H1 (cell line): ENCODE measurements at regions of chr22 and their contacts with region 1.

Region 1: DNA sequence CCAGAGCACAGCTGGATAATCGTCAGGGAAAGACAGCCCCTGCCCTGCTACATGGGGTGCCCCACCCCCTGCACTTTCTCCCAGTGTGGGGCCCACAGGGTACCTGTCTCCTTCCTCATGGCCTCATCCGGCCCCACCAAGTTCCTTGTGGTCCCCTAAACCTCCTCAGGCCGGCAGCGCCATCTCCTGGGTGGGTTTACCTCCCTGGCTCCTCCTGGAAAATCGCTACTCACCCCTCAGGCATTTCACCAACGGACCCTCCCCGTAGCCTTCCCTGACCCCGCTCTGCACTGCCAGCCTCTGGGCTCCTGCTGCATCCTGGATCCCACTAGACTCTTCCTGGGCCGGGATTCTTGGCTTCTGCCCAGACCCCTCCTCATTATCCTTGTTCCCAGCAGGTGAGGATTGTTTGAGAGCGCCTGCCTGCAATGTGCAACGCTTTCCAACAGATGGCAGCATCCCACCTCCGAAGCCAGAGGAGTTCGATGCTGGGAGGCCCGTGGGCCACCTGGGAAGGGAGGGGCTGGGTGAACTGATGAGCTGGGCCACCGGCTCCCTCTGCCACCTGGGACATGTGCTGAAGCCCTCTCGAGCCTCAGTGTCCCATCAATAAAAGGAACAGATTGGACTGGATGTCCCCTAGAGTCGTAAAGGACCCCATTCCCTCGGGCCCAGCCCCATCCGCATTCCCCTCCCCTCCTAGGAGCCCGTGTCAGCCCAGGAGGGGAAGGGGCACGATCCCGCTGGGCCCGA is 44.2 kb upstream of the TTLL12 start:
- DNase-seq: peak; percentile 66 to 92
- H3K4me3 ChIP-seq: peak overlapping the region in 3 of 4 experiments; percentile 40 to 54 (median 52); a peak in 6 of 8 replicates
- H3K27ac ChIP-seq: no peak overlapping the region
- H3K4me1 ChIP-seq: peaks cover 0 to 19% (median 13%) of the 10 kb centered on the region in 4 experiments; a peak in 6 of 7 replicates
- H3K27me3 ChIP-seq: no peaks in the 10 kb centered on the region
- CTCF ChIP-seq: peak; percentile 88 to 94 (median 89)
- EP300 ChIP-seq: no peak
- POLR2A ChIP-seq: no peak
- RAD21 ChIP-seq: peak; percentile 84 to 88

Region 2: DNA sequence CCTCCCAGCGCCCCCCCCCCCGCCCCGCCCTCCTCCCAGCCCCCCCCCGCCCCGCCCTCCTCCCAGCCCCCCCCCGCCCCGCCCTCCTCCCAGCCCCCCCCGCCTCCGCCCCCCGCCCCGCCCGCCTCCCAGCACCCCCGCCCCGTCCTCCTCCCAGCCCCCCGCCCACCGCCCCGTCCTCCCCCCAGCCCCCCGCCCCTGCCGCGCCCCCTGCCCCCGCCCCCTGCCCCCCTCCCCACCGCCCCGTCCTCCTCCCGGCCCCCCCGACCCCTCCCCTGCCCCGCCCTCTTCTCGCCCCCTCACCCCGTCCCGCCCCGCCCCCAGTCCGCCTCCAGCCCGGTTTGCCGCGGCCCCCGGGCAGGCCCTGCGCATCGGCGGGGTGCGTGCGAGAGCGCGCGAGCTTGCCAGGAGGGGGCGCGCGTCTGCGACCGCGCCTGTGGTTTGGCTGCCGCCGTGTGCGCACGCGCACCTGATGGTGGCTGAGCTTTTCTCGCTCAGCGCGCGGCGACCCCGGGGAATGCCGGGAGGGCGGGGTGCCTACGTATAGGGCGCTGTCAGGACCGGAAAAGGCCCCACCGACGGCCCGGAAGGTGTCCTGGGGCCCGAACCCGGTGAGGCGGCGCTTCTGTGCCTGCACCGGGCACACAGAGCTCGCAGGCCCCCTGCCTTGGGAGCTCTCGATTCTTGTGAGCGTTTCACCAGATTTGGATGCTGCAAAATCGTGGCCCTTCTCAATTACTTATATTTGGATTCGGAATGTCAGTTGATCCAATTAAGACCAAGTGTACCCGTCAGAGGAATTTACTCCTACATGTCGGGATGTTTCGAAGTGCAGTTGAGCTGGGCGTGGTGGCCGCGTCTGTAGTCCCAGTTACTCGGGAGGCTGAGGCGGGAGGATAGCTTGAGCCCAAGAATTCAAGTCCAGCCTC is 43.7 kb before region 1 on chr22:
- CTCF ChIA-PET with region 1: interaction called, 104 read pairs
- POLR2A ChIA-PET with region 1: no interaction called
- DNase-seq: peak; percentile 87 to 96
- H3K4me3 ChIP-seq: peak overlapping the region; percentile 34 to 62 (median 40); a peak in 7 of 8 replicates
- H3K27ac ChIP-seq: peak overlapping the region; percentile 53; the same call in 1 of the 2 replicates
- H3K4me1 ChIP-seq: peaks cover 0 to 14% (median 5%) of the 10 kb centered on the region in 4 experiments; a peak in 4 of 7 replicates
- H3K27me3 ChIP-seq: no peaks in the 10 kb centered on the region; a peak in 1 of 7 replicates
- CTCF ChIP-seq: peak; percentile 59 to 64 (median 60)
- EP300 ChIP-seq: peak in 1 of 2 experiments; percentile 5; a peak in 1 of 3 replicates
- POLR2A ChIP-seq: peak; percentile 26 to 68
- RAD21 ChIP-seq: peak; percentile 22 to 35; a peak in 3 of 4 replicates

Region 3: GRCh38 chr22:43213051-43213450 is 18.1 kb before region 1 on chr22:
- CTCF ChIA-PET with region 1: interaction called, 186 read pairs
- POLR2A ChIA-PET with region 1: interaction called, 5 read pairs
- DNase-seq: peak in 1 of 2 experiments; percentile 63
- H3K4me3 ChIP-seq: no peak overlapping the region
- H3K27ac ChIP-seq: no peak overlapping the region
- H3K4me1 ChIP-seq: peaks cover 0 to 20% (median 10%) of the 10 kb centered on the region in 4 experiments; a peak in 5 of 7 replicates
- H3K27me3 ChIP-seq: no peaks in the 10 kb centered on the region
- CTCF ChIP-seq: no peak
- EP300 ChIP-seq: no peak
- POLR2A ChIP-seq: no peak
- RAD21 ChIP-seq: no peak

Region 4: DNA sequence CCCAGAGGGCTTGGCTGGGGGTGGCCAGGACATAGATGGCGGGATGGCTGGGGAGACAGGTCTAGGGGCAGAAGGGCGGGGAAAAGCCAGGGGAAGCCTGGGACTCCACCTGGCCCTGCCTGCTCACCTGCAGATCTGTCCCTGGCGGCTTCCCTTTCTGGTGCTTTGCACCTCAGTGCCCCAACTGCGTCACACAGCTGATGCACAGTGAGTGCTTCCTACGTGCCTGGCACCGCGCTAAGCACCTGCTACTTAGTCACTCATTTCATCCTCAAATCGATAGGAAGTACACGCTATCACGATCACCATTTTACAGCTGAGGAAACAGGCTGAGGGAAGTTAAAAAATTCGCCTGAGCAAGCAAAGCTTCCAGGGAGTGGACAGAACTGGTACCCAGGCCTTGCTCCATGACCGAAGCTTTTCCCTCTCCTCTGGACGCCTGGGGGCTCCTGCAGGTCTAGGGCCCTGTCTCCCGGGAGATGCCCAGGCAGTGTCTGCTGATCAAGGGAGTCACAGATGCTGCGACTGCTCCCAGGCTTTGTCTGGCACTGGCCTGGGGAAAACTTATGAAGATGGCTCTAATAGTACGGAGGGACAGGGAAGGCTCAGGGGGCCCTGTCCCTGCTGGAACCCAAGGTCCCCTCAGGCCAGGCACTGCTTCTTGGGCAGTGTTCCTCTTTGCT is 18.8 kb after region 1 on chr22:
- CTCF ChIA-PET with region 1: interaction called, 71 read pairs
- POLR2A ChIA-PET with region 1: interaction called, 4 read pairs
- DNase-seq: no peak
- H3K4me3 ChIP-seq: no peak overlapping the region
- H3K27ac ChIP-seq: no peak overlapping the region
- H3K4me1 ChIP-seq: no peaks in the 10 kb centered on the region; a peak in 1 of 7 replicates
- H3K27me3 ChIP-seq: no peaks in the 10 kb centered on the region
- CTCF ChIP-seq: no peak
- EP300 ChIP-seq: no peak
- POLR2A ChIP-seq: no peak
- RAD21 ChIP-seq: no peak

Region 5: GRCh38 chr22:43385770-43386641 is 154.9 kb after region 1 on chr22:
- CTCF ChIA-PET with region 1: interaction called, 38 read pairs
- POLR2A ChIA-PET with region 1: no interaction called
- DNase-seq: peak; percentile 53 to 90
- H3K4me3 ChIP-seq: no peak overlapping the region
- H3K27ac ChIP-seq: no peak overlapping the region
- H3K4me1 ChIP-seq: peaks cover 0 to 9% (median 2%) of the 10 kb centered on the region in 4 experiments; a peak in 3 of 7 replicates
- H3K27me3 ChIP-seq: peaks cover 0 to 12% (median 3%) of the 10 kb centered on the region in 4 experiments; a peak in 5 of 7 replicates
- CTCF ChIP-seq: peak; percentile 95 to 96 (median 96)
- EP300 ChIP-seq: no peak
- POLR2A ChIP-seq: no peak
- RAD21 ChIP-seq: peak; percentile 100